ENCODE measurements at regions of chr22 and their contacts with region 1.

Region 1: GRCh38 chr22:41085842-41086241 is 6.5 kb upstream of the EP300 start:
- DNase-seq: no peak
- ATAC-seq: no peak
- H3K4me3 ChIP-seq: no peak overlapping the region
- H3K4me1 ChIP-seq: no peaks in the 10 kb centered on the region
- CTCF ChIP-seq: no peak

Region 2: GRCh38 chr22:41030891-41031290 is 55.0 kb before region 1 on chr22:
- intact Hi-C with region 1: loop called (anchors 10 kb)
- DNase-seq: no peak
- ATAC-seq: no peak
- H3K4me3 ChIP-seq: no peak overlapping the region
- H3K4me1 ChIP-seq: no peaks in the 10 kb centered on the region
- CTCF ChIP-seq: no peak

Region 3: DNA sequence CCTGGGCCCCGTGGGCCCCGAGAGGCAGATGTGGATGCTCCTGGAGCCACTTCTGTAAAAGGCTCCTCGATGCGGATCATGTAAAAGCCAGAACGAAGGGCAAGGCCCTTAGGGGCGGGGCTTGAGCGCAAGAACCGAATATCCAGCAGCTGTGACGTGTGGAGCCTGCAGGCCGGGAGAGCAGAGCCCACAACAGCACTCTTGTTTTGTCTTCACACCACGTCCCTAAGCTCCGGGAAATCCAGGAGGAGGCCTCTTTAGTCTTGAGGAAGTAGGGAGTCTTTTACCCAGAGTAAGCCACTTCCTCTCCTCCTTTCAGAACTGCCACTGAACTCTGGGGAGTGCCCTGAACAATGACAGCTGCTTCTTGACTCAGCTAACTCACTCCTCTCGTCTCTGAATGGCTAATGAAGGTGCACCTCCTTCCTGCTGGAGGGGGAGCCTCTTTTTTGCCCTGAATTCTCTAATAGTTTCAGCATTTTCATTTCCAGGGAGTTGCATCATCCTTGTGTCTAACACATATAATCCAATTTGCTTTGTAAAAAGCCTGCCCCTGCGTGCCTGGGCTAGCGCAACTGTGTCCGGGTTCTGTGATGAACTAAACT is 131.8 kb after region 1 on chr22:
- intact Hi-C with region 1: no loop called
- DNase-seq: peak in 2 of 3 donors; percentile 47 to 56
- ATAC-seq: peak; percentile 78
- H3K4me3 ChIP-seq: no peak overlapping the region
- H3K4me1 ChIP-seq: peaks cover 2% of the 10 kb centered on the region
- CTCF ChIP-seq: no peak